ENCODE measurements at regions of chr2 and their contacts with region 1.

Region 1: GRCh38 chr2:65070172-65070830 is 14.1 kb downstream of the CEP68 start:
- DNase-seq: peak in 1 of 6 donors; percentile 15
- ATAC-seq: peak in 2 of 4 donors; percentile 13 to 27
- H3K4me3 ChIP-seq: no peak overlapping the region
- H3K27ac ChIP-seq: peak overlapping the region in 1 of 4 donors; percentile 41
- H3K4me1 ChIP-seq: peaks cover 2 to 5% (median 2%) of the 10 kb centered on the region in 3 donors
- H3K27me3 ChIP-seq: no peaks in the 10 kb centered on the region
- CTCF ChIP-seq: no peak

Region 2: DNA sequence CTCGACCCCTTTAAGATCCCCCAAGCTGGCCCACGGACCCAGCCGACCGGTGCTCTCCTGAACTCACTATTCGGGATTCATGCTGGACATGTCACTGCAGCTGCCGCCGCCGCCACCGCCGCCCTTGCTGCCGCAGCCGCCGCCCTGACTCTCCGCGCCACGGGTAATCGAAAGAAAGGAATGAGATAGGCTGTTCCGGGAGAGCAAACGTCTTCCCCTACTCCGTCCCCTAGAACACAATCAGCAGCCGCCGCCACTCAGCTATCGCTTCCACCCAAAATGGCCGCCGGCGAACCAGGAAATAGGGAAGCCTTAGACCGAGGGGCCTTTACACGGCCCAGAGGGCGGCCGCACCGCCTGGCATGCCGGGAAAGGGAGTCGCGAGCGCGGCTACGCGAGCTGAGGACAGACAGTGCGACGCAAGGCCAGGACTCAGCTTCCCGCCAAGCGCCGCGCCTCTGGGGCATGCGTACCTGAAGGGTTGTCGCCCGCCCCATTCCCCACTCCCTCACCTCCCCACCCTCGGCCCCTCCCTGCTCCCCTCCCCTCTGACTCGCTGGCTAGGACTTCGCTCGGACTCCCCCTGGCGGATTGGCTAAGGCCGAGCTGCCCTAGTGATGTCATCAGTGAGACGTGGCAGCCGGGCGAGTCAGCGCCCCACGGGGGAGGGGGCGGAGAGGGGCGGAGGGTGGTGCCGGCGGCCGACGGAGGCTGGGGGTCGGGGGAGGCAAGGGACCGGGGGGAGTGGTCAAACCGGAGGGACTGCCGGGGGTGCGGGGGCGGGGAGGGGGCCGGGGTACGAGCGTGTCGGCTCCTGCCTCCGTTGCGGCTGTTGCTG is 59.7 kb after region 1 on chr2 and contains the start of gene RAB1A:
- intact Hi-C with region 1: loop called in 1 of 3 experiments (anchors 10 kb)
- DNase-seq: peak; percentile 98 to 100 (median 100)
- ATAC-seq: peak; percentile 85 to 93 (median 90)
- H3K4me3 ChIP-seq: peak within 1 kb of the TSS; percentile 67 to 89 (median 76)
- H3K27ac ChIP-seq: peak within 1 kb of the TSS; percentile 95 to 98 (median 97)
- H3K4me1 ChIP-seq: peaks cover 6 to 32% (median 11%) of the 10 kb centered on the region in 3 donors
- H3K27me3 ChIP-seq: no peaks in the 10 kb centered on the region
- CTCF ChIP-seq: peak in 2 of 4 donors; percentile 21 to 48
- total RNA-seq, gene RAB1A: 47.3 to 84.0 (median 69.4) TPM

Region 3: DNA sequence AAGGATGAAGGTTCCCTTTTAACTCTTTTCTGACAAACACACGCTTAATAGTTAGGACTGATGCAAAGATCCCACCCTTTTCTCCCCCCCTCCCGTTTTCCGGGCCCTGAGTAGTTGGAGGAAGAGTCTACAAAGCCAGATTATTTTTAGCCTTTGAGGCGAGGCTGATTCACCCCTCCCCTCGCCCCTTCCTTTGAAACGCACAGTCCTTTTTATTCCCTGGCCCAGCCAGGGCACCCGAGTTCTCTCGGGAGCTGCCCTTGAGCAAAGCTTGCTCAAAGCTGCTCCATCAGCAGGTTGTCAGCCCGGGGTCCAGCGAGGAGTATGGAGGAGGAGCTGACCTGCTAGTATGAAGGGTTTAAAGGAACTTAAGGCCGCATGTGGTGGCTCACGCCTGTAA is 409.2 kb after region 1 on chr2:
- intact Hi-C with region 1: no loop called
- DNase-seq: no peak
- ATAC-seq: no peak
- H3K4me3 ChIP-seq: no peak overlapping the region
- H3K27ac ChIP-seq: no peak overlapping the region
- H3K4me1 ChIP-seq: no peaks in the 10 kb centered on the region
- H3K27me3 ChIP-seq: no peaks in the 10 kb centered on the region
- CTCF ChIP-seq: no peak

Region 4: GRCh38 chr2:66174474-66174873 is 1104.2 kb after region 1 on chr2:
- intact Hi-C with region 1: no loop called
- DNase-seq: no peak
- ATAC-seq: no peak
- H3K4me3 ChIP-seq: no peak overlapping the region
- H3K27ac ChIP-seq: no peak overlapping the region
- H3K4me1 ChIP-seq: peaks cover 0 to 7% (median 0%) of the 10 kb centered on the region in 3 donors
- H3K27me3 ChIP-seq: no peaks in the 10 kb centered on the region
- CTCF ChIP-seq: no peak

Measured in pancreas (tissue), 10 donors.